Thyroid gland (tissue), 4 donors: ENCODE measurements at regions of chr12 and their contacts with region 1.

Region 1: DNA sequence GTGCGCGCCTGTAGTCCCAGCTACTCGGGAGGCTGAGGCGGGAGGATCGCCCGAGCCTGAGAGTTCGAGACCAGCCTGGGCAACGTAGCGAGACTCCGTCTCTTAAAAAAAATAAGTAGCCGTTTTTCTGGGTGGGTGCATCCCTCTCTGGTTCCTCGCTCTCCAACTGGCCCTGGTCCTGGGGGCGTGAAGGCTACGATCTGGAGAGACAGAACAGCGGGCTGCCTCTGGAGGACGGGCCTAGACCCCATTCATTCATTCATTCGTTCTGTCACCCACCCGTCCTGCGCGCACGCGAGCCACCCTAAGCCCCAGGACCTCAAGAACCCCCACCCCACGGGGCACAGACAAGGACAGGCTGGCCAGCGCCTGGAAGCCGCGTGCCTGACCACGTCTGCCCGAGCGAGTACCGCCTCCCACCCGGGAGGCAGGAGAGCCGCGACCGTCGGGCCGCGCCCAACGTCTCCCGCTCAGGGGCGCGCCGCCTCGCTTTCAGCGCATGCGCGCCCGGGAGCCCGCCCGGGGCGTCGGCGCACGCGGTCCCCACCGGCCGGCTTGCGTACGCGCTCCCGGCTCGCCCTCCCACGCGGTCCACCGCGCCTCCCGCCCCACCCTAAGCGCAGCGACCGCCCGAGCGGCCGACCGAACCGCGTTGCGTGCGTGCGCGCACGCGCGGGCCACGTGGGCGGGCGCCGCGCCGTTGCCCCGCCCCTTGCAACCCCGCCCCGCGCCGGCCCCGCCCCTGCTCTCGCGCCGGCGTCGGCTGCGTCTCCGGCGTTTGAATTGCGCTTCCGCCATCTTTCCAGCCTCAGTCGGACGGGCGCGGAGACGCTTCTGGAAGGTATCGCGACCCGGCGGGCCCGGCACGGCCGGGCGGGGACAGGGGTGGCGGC is at the start of gene RAN:
- DNase-seq: peak; percentile 92 to 93
- H3K4me3 ChIP-seq: peak within 1 kb of the TSS; percentile 55 to 73 (median 62)
- H3K27ac ChIP-seq: peak within 1 kb of the TSS; percentile 55 to 79 (median 78)
- H3K4me1 ChIP-seq: peaks cover 18 to 27% of the 10 kb centered on the region in 2 donors
- H3K27me3 ChIP-seq: no peaks in the 10 kb centered on the region
- CTCF ChIP-seq: no peak
- POLR2A ChIP-seq: peak in 1 of 2 donors; percentile 61
- total RNA-seq, gene RAN: 123 to 169 (median 142) TPM

Region 2: GRCh38 chr12:130514149-130514551 is 357.4 kb before region 1 on chr12:
- intact Hi-C with region 1: no loop called
- DNase-seq: peak in 1 of 2 donors; percentile 11
- H3K4me3 ChIP-seq: no peak overlapping the region
- H3K27ac ChIP-seq: no peak overlapping the region
- H3K4me1 ChIP-seq: no peaks in the 10 kb centered on the region
- H3K27me3 ChIP-seq: no peaks in the 10 kb centered on the region
- CTCF ChIP-seq: no peak
- POLR2A ChIP-seq: no peak

Region 3: DNA sequence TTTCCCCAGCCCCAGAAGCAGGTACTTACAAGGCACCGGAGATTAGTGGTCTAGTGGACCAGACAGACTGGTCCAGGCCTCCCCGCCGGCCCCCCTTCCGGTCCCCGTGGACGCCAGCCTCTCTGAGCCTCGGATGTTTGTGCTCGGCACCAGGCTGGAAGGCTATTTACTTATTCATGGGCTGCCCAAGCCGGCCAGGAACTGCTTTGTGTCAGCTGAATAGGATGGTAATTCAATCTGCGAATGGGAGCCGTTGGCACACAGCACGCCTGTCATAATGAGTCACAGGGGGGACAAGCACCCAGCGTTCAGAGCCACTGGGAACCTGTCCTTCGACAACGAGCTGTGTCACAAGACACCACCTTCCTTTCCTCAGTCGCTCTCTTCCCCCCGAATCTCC is 237.8 kb before region 1 on chr12:
- intact Hi-C with region 1: no loop called
- DNase-seq: peak; percentile 7 to 15
- H3K4me3 ChIP-seq: no peak overlapping the region
- H3K27ac ChIP-seq: no peak overlapping the region
- H3K4me1 ChIP-seq: no peaks in the 10 kb centered on the region
- H3K27me3 ChIP-seq: no peaks in the 10 kb centered on the region
- CTCF ChIP-seq: no peak
- POLR2A ChIP-seq: no peak

Region 4: DNA sequence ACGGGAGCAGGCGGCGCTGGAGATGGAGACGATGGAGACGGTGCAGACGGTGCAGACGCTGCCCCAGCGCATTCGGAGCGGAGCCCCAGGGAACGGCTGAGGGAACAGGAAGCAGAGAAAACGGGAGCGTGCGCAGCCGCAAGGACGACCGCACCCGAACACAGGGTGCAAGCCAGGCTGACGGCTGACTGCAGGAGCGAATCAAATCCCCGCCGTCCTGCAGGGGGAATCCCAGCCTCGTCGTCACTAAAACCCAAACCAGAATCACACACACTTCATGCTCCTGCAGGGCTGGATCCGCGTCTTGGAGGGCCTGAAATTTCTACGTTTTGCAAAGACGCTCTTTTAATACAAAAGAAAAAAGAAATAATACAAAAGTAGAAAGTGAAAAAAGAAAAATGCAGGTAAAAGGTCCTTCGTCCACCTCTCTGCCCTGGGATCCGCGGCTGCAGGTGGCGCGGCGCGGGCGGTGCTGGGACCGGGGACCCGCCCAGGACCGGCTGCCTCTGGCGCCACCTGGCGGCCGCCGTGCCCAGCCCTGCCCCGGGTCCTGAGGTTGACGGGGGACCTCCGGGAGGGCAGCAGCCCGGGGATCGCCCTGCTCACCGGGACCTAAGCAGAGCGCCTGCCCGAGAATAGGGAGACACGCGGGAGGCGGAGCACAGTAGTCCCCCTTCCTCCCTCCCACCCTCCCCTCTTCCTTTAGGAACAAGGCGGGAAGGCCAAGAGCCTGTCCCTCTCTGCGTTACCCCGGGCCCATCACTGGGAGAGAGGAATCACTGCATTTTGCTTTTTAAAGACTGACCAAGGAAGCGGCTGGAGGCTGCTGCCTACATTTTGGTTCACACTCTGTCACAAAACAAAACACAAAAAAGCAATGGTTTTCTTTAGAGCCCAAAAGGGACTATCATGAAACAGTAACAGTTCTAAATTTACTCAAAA is 52.6 kb before region 1 on chr12:
- intact Hi-C with region 1: loop called (anchors 2 kb)
- DNase-seq: peak; percentile 75 to 76
- H3K4me3 ChIP-seq: peak overlapping the region in 2 of 3 donors; percentile 15 to 29
- H3K27ac ChIP-seq: no peak overlapping the region
- H3K4me1 ChIP-seq: peaks cover 0 to 11% of the 10 kb centered on the region in 2 donors
- H3K27me3 ChIP-seq: no peaks in the 10 kb centered on the region
- CTCF ChIP-seq: peak; percentile 28 to 98 (median 85)
- POLR2A ChIP-seq: no peak